Naive thymus-derived CD4-positive, alpha-beta T cell (primary cell): ENCODE measurements at regions of chr7 and their contacts with region 1.

Region 1: DNA sequence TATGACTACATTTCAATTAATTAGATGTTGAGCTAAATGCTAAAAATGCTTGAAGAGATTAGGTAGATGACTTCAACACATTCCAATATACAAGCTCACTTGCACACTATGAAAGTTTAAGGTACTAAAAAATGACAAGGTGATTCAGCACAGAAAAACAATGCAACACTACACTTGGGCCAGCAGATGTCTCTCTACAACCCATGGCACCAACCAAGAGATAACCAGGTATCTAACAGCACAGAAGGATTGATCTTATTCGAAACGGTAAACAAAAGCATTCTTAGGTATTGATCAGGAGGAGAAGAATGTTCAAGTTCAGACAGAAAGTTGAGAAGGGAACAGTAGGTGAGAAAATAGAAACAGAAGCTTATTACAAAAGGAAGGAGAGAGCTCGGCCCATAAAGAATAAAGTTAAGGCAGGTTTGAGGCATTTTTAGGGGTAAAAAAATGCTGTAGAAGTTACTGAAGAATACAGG is 248.2 kb upstream of the KLF14 start:
- DNase-seq: peak in 7 of 9 donors; percentile 33 to 62 (median 56)
- ATAC-seq: peak; percentile 88
- H3K4me3 ChIP-seq: peak overlapping the region; percentile 9
- H3K4me3 Mint-ChIP-seq: no peak overlapping the region
- H3K27ac ChIP-seq: peak overlapping the region; percentile 65
- H3K27ac Mint-ChIP-seq: no peak overlapping the region
- H3K4me1 ChIP-seq: peaks cover 45 to 61% of the 10 kb centered on the region in 2 donors
- H3K4me1 Mint-ChIP-seq: peaks cover 7 to 39% (median 11%) of the 10 kb centered on the region in 7 donors
- H3K27me3 ChIP-seq: no peaks in the 10 kb centered on the region
- H3K27me3 Mint-ChIP-seq: no peaks in the 10 kb centered on the region

Region 2: DNA sequence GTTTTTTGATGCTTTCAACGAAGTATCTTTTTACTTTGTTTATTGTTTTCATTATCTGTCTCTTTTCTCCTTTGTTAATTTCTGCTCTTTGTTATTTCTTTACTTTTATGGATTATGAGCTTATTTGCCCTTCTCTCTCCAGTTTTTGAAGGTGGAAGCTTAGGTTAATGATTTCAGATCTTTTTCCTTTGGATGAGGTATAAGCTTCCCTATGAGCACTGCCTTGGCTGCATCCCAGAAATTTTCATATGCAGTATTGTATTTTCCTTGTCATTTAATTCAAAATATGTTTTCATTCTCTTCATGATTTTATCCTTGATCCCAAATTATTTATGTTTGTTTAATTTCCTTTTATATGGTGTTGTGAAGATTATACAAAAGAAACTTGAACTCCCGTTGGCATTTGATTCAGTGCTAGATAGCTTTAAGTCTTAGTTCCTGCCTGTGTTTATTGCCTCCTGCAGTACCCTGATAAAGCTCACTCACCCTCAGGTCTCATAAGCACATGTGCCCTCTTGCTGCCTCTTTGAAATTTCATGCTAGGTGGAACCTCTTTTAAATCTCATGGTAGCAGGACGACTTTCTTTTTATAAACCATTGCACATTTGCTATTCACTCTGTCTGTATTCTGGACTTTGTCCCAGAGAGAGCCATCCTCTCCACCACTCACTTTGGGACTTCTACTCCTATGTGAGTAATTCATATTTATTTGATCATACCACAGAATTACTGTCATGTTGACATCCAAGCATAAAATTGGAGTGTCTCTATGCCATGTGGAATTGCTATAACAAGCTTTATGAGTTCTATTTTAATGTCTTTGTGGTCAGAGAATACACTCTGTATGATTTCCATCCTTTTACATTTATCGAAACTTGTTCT is 518.4 kb before region 1 on chr7:
- CTCF ChIA-PET with region 1: no interaction called
- POLR2A ChIA-PET with region 1: no interaction called
- intact Hi-C with region 1: no loop called
- DNase-seq: peak in 4 of 9 donors; percentile 9 to 38 (median 22)
- ATAC-seq: no peak
- H3K4me3 ChIP-seq: no peak overlapping the region
- H3K4me3 Mint-ChIP-seq: no peak overlapping the region
- H3K27ac ChIP-seq: no peak overlapping the region
- H3K27ac Mint-ChIP-seq: no peak overlapping the region
- H3K4me1 ChIP-seq: no peaks in the 10 kb centered on the region
- H3K4me1 Mint-ChIP-seq: peaks cover 0 to 13% (median 11%) of the 10 kb centered on the region in 7 donors
- H3K27me3 ChIP-seq: no peaks in the 10 kb centered on the region
- H3K27me3 Mint-ChIP-seq: peaks cover 0 to 4% (median 0%) of the 10 kb centered on the region in 5 donors

Region 3: GRCh38 chr7:130970696-130971095 is 11.5 kb before region 1 on chr7:
- CTCF ChIA-PET with region 1: interaction called, 5 read pairs
- POLR2A ChIA-PET with region 1: no interaction called
- intact Hi-C with region 1: loop called (anchors 1 kb)
- DNase-seq: no peak
- ATAC-seq: no peak
- H3K4me3 ChIP-seq: no peak overlapping the region
- H3K4me3 Mint-ChIP-seq: peak overlapping the region in 5 of 10 donors; percentile 10 to 52 (median 38)
- H3K27ac ChIP-seq: no peak overlapping the region
- H3K27ac Mint-ChIP-seq: peak overlapping the region in 8 of 9 donors; percentile 40 to 84 (median 68)
- H3K4me1 ChIP-seq: peaks cover 0 to 20% of the 10 kb centered on the region in 2 donors
- H3K4me1 Mint-ChIP-seq: peaks cover 48 to 80% (median 69%) of the 10 kb centered on the region in 7 donors
- H3K27me3 ChIP-seq: no peaks in the 10 kb centered on the region
- H3K27me3 Mint-ChIP-seq: no peaks in the 10 kb centered on the region

Region 4: GRCh38 chr7:131007394-131008330 is 25.5 kb after region 1 on chr7:
- CTCF ChIA-PET with region 1: interaction called, 20 read pairs
- POLR2A ChIA-PET with region 1: interaction called, 3 read pairs
- intact Hi-C with region 1: loop called (anchors 1 kb)
- DNase-seq: peak in 7 of 9 donors; percentile 51 to 69 (median 63)
- ATAC-seq: peak; percentile 72
- H3K4me3 ChIP-seq: no peak overlapping the region
- H3K4me3 Mint-ChIP-seq: peak overlapping the region in 9 of 10 donors; percentile 52 to 87 (median 69)
- H3K27ac ChIP-seq: peak overlapping the region; percentile 67
- H3K27ac Mint-ChIP-seq: peak overlapping the region; percentile 83 to 97 (median 88)
- H3K4me1 ChIP-seq: peaks cover 60 to 64% of the 10 kb centered on the region in 2 donors
- H3K4me1 Mint-ChIP-seq: peaks cover 68 to 94% (median 87%) of the 10 kb centered on the region in 7 donors
- H3K27me3 ChIP-seq: no peaks in the 10 kb centered on the region
- H3K27me3 Mint-ChIP-seq: no peaks in the 10 kb centered on the region

Region 5: DNA sequence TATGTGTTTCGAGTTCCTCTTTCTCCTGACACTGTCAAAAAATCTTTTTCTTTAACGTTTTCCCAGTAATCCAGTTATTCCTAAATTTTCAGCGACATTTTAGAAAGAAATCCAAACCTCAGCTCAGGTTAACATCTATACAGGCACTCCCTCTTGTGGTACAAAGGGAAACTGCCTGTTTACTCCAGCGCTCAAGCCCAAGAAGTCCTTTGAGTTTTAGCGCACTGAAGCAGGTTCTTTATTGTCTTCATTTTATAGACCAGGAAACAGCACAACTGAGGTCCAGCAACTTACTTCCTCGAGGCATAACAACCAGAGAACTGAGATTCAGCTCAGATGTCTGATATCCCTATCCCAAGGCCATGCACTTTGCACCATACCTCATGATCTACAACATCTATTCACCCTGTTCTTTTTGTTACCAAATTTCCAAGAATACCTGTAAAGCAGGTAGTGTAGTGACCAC is 58.3 kb after region 1 on chr7:
- CTCF ChIA-PET with region 1: interaction called, 11 read pairs
- POLR2A ChIA-PET with region 1: interaction called, 4 read pairs
- intact Hi-C with region 1: loop called (anchors 1 kb)
- DNase-seq: peak in 7 of 9 donors; percentile 31 to 63 (median 56)
- ATAC-seq: peak; percentile 71
- H3K4me3 ChIP-seq: no peak overlapping the region
- H3K4me3 Mint-ChIP-seq: peak overlapping the region; percentile 16 to 84 (median 60)
- H3K27ac ChIP-seq: no peak overlapping the region
- H3K27ac Mint-ChIP-seq: peak overlapping the region; percentile 29 to 82 (median 54)
- H3K4me1 ChIP-seq: peaks cover 14 to 27% of the 10 kb centered on the region in 2 donors
- H3K4me1 Mint-ChIP-seq: peaks cover 44 to 78% (median 68%) of the 10 kb centered on the region in 7 donors
- H3K27me3 ChIP-seq: no peaks in the 10 kb centered on the region
- H3K27me3 Mint-ChIP-seq: no peaks in the 10 kb centered on the region

Region 6: GRCh38 chr7:131219312-131220041 is 237.3 kb after region 1 on chr7:
- CTCF ChIA-PET with region 1: no interaction called
- POLR2A ChIA-PET with region 1: no interaction called
- intact Hi-C with region 1: no loop called
- DNase-seq: no peak
- ATAC-seq: peak; percentile 70
- H3K4me3 ChIP-seq: no peak overlapping the region
- H3K4me3 Mint-ChIP-seq: no peak overlapping the region
- H3K27ac ChIP-seq: no peak overlapping the region
- H3K27ac Mint-ChIP-seq: no peak overlapping the region
- H3K4me1 ChIP-seq: no peaks in the 10 kb centered on the region
- H3K4me1 Mint-ChIP-seq: peaks cover 0 to 16% (median 11%) of the 10 kb centered on the region in 7 donors
- H3K27me3 ChIP-seq: no peaks in the 10 kb centered on the region
- H3K27me3 Mint-ChIP-seq: peaks cover 0 to 3% (median 0%) of the 10 kb centered on the region in 5 donors

Region 7: GRCh38 chr7:131424219-131424822 is 442.1 kb after region 1 on chr7:
- CTCF ChIA-PET with region 1: interaction called, 4 read pairs
- POLR2A ChIA-PET with region 1: no interaction called
- intact Hi-C with region 1: loop called in 1 of 2 experiments (anchors 1 kb)
- DNase-seq: peak in 7 of 9 donors; percentile 18 to 50 (median 44)
- ATAC-seq: peak; percentile 90
- H3K4me3 ChIP-seq: no peak overlapping the region
- H3K4me3 Mint-ChIP-seq: no peak overlapping the region
- H3K27ac ChIP-seq: no peak overlapping the region
- H3K27ac Mint-ChIP-seq: peak overlapping the region in 2 of 9 donors; percentile 11
- H3K4me1 ChIP-seq: no peaks in the 10 kb centered on the region
- H3K4me1 Mint-ChIP-seq: peaks cover 0 to 20% (median 13%) of the 10 kb centered on the region in 7 donors
- H3K27me3 ChIP-seq: no peaks in the 10 kb centered on the region
- H3K27me3 Mint-ChIP-seq: no peaks in the 10 kb centered on the region